Naive thymus-derived CD8-positive, alpha-beta T cell (primary cell): ENCODE measurements at regions of chr2 and their contacts with region 1.

Region 1: DNA sequence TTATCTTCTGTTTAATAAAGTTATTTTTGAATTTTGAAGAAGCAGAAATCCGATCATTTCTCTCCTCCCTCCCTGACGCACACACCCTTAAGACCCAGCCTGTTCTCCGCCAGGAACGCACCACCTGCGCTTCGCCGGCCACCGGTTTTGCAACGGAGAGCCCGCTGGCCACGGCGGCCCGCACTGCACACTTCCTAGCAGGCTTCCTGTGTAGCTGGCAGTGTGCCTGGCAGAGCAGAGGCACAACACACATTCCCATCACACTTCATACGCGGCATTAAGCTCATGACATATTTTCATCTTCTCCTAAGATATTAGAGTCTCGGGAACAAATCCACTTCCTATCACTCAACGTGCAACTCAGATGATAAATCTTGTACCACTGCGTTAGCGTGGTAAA is 148.0 kb downstream of the HDAC4 start:
- DNase-seq: no peak
- ATAC-seq: peak; percentile 71 to 76
- H3K4me3 Mint-ChIP-seq: peak overlapping the region; percentile 75 to 98 (median 88)
- H3K27ac Mint-ChIP-seq: peak overlapping the region; percentile 32 to 95 (median 85)
- H3K4me1 Mint-ChIP-seq: peaks cover 37 to 89% (median 71%) of the 10 kb centered on the region in 4 donors
- H3K27me3 Mint-ChIP-seq: no peaks in the 10 kb centered on the region

Region 2: DNA sequence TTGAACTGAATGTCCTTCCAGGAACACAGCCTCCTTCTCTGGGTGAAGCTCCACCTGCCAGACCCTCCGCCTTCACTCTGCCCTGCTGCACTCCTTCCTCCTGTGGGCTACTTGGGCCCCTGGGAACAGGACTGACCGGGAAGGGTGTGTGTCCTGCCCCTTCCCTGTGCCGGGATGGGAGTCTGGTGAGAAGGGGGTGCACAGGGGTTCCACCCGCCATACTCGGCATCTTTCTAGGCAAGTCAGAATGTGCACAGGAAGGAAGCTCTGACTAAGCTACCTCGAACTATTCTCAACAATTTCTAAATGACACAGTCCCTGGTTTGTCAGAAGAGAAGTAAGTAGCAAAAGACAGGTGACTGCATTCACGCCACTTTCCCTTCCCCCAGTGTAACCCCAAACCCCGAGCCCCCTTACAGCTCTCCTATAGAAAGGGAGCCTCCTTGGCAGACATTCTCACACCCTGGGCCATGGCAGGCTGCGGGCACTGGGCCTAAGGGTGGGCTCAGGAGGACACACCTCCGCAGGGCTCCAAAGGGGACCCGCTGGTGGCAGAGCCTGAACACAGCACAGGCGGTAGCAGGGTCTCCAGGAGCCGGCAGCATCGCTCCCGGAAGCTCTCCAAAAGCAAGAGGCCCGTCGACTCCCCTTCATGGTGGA is 36.1 kb before region 1 on chr2:
- POLR2A ChIA-PET with region 1: no interaction called
- DNase-seq: peak in 1 of 10 donors; percentile 21
- ATAC-seq: peak; percentile 49 to 59
- H3K4me3 Mint-ChIP-seq: peak overlapping the region; percentile 40 to 86 (median 78)
- H3K27ac Mint-ChIP-seq: peak overlapping the region; percentile 47 to 89 (median 81)
- H3K4me1 Mint-ChIP-seq: peaks cover 41 to 76% (median 65%) of the 10 kb centered on the region in 4 donors
- H3K27me3 Mint-ChIP-seq: no peaks in the 10 kb centered on the region

Region 3: GRCh38 chr2:239230318-239231052 is 22.3 kb before region 1 on chr2:
- POLR2A ChIA-PET with region 1: interaction called, 11 read pairs
- DNase-seq: peak in 5 of 10 donors; percentile 11 to 60 (median 31)
- ATAC-seq: peak; percentile 58 to 77
- H3K4me3 Mint-ChIP-seq: peak overlapping the region; percentile 50 to 81 (median 68)
- H3K27ac Mint-ChIP-seq: peak overlapping the region; percentile 65 to 94 (median 89)
- H3K4me1 Mint-ChIP-seq: peaks cover 34 to 86% (median 68%) of the 10 kb centered on the region in 4 donors
- H3K27me3 Mint-ChIP-seq: no peaks in the 10 kb centered on the region

Region 4: GRCh38 chr2:239288951-239289511 is 36.2 kb after region 1 on chr2:
- POLR2A ChIA-PET with region 1: no interaction called
- DNase-seq: peak in 7 of 10 donors; percentile 34 to 88 (median 52)
- ATAC-seq: peak; percentile 73 to 75
- H3K4me3 Mint-ChIP-seq: peak overlapping the region; percentile 64 to 87 (median 82)
- H3K27ac Mint-ChIP-seq: peak overlapping the region; percentile 91 to 100 (median 98)
- H3K4me1 Mint-ChIP-seq: peaks cover 42 to 90% (median 79%) of the 10 kb centered on the region in 4 donors
- H3K27me3 Mint-ChIP-seq: no peaks in the 10 kb centered on the region